A673 (cell line): ENCODE measurements at regions of chr6 and their contacts with region 1.

Region 1: DNA sequence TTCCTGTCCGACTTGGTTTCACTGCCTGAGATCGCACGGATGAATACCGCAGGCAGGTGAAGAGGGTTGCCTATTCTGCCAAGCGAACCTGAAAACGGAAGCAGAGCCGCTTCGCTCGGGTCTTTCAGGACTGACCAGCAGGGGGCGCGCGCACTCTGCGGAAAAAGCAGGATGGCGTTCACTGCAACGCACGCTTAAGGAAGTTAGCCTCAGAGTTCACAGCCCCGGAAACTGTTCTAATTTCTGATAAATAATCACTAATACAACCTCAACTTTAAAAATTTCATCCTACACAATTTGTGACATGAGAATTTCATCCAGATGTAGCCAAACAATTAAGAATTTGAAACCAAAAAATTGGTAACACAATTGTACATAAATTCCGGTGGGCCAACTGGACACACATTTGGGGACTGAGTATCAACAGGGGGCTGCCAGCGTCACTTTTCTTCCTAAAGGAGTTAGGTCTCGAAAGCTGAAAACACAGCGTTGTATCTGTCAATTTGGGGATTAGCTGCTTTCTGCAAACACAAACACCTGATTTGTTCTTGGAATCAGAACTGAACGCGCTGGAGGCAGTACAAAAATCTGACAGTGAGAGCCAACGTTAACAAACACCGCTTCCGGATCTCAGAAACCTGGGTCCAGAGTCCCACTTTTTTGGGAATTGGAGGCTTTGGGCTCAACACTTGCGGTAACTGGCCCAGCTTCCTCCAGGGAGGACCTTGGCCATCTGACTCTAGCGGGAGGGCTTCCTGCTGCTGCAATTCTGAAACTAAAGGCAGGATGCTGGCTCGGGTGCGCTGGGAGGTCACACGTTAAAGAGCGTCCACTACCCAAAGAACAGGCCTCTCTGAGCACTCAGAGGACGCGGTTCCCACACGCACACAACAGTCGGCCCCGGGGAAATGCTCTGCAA is 8.8 kb downstream of the PXDC1 start:
- DNase-seq: peak; percentile 74
- H3K4me3 ChIP-seq: no peak overlapping the region
- H3K27ac ChIP-seq: peak overlapping the region; percentile 25
- H3K4me1 ChIP-seq: peaks cover 20% of the 10 kb centered on the region
- H3K27me3 ChIP-seq: no peaks in the 10 kb centered on the region
- CTCF ChIP-seq: peak; percentile 95

Region 2: GRCh38 chr6:3542032-3542640 is 200.5 kb before region 1 on chr6:
- CTCF ChIA-PET with region 1: no interaction called
- POLR2A ChIA-PET with region 1: no interaction called
- intact Hi-C with region 1: no loop called
- DNase-seq: no peak
- H3K4me3 ChIP-seq: no peak overlapping the region
- H3K27ac ChIP-seq: no peak overlapping the region
- H3K4me1 ChIP-seq: no peaks in the 10 kb centered on the region
- H3K27me3 ChIP-seq: no peaks in the 10 kb centered on the region
- CTCF ChIP-seq: no peak

Region 3: DNA sequence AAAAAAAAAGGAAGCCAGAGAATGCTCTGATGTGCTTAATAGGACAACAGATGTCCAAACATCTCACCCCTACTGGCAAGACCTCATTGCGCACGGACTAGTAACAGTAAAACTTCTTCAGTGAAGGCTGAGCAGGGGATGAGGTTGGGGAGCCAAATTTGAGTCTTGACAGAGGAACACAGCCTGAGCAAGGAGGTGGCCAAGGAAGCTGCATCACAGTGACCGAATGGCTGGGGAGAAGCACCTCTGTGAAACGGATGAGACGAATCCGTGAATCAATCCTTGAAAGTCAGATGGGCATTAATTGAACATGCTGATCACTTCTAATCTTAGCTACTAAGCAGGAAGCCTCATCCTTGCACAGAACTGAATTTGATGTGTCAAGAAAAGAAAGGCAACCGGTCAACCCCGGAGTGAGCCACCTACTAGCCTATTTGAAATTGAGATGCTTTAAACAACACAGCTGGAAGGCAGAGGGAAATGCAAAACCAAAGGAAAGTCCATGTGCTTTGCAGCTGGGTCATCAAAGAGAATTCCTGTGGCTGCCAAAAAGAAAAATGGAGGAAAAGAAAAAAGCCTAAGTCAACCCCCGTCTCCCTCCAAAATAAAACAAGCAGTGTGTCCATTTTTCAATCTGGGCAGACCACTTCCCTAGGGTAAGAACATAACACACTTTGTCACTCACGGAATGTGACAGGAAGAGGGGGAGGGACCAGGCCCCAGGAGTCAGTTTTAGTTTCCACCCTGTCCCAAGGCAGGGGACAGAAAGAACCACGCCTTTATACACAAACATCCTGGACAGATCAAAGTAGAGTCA is 20.7 kb before region 1 on chr6:
- CTCF ChIA-PET with region 1: no interaction called
- POLR2A ChIA-PET with region 1: no interaction called
- intact Hi-C with region 1: no loop called
- DNase-seq: no peak
- H3K4me3 ChIP-seq: no peak overlapping the region
- H3K27ac ChIP-seq: no peak overlapping the region
- H3K4me1 ChIP-seq: no peaks in the 10 kb centered on the region
- H3K27me3 ChIP-seq: no peaks in the 10 kb centered on the region
- CTCF ChIP-seq: no peak

Region 4: DNA sequence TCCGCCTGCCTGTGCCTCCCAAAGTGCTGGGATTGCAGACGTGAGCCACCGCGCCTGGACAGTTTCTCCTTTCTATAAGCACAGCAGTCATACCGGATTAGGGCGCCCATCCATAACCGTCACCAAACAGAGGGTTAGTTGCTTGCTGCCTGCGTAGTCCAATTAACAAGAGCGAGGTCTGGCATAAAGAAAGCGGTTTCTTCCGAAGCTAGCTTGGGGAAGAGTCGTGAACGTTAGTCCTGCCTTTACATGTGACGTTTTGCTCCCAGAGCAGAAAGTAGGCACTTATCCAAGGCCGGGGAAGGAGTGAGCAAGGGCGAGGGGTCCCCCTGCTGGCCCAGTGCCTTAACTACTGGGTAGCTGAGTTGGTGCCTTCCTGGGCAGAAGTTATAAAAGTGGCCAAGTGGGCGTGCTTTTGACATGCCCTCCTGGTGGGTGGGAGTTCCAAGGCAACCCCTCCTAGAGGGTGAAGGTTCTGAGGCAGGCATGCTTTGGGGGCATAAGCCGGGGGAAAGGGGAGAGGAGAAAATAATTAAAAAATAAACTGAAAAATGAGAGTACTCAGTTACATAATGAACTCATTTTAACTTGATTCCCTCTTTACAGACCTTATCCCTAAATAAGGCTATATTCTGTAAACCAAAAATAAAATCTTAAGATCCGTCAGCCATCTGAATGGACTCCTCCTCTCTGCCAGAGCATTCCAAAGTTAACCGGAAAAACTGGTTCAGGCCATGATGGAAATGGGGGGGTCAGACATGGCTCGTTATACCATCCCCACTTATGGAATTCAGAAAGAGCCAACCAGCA is 248.2 kb after region 1 on chr6:
- CTCF ChIA-PET with region 1: interaction called, 7 read pairs
- POLR2A ChIA-PET with region 1: no interaction called
- intact Hi-C with region 1: loop called (anchors 2 kb)
- DNase-seq: peak; percentile 94
- H3K4me3 ChIP-seq: no peak overlapping the region
- H3K27ac ChIP-seq: peak overlapping the region; percentile 59
- H3K4me1 ChIP-seq: peaks cover 3% of the 10 kb centered on the region
- H3K27me3 ChIP-seq: no peaks in the 10 kb centered on the region
- CTCF ChIP-seq: peak; percentile 95

Region 5: GRCh38 chr6:4008324-4009047 is 265.8 kb after region 1 on chr6:
- CTCF ChIA-PET with region 1: no interaction called
- POLR2A ChIA-PET with region 1: no interaction called
- intact Hi-C with region 1: loop called (anchors 5 kb)
- DNase-seq: peak; percentile 88
- H3K4me3 ChIP-seq: no peak overlapping the region
- H3K27ac ChIP-seq: peak overlapping the region; percentile 45
- H3K4me1 ChIP-seq: peaks cover 20% of the 10 kb centered on the region
- H3K27me3 ChIP-seq: no peaks in the 10 kb centered on the region
- CTCF ChIP-seq: peak; percentile 68

Region 6: DNA sequence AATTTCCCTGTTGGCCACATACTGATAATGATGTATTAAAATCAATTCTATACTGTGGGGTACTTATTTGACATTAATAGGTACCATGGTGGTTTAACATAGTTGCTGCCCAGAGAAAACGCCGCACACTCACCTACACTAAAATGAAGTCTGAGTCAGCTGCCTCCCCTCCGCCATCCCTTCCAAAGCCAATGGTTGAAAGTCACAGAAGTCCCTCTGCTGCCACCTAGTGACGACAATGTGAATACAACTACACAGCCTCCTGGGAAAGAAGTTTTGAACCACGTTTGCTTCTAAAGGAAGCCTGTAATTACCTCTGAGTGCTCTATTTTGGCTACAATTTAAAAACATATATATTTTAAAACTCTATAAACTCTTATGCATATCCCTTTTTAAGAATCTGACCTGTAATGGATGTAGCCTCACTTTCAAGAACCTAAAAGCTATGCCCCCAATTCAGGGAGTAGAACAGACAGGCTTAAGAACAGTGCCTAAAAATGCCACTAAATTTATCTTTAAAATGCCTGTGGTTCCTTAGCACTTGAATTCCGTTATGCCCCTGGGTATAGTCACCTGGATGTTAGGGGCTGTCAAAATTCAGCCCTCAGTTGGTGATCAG is 413.3 kb after region 1 on chr6:
- CTCF ChIA-PET with region 1: no interaction called
- POLR2A ChIA-PET with region 1: no interaction called
- intact Hi-C with region 1: loop called (anchors 5 kb)
- DNase-seq: peak; percentile 84
- H3K4me3 ChIP-seq: no peak overlapping the region
- H3K27ac ChIP-seq: no peak overlapping the region
- H3K4me1 ChIP-seq: peaks cover 6% of the 10 kb centered on the region
- H3K27me3 ChIP-seq: no peaks in the 10 kb centered on the region
- CTCF ChIP-seq: peak; percentile 89

Region 7: GRCh38 chr6:4210629-4211423 is 468.1 kb after region 1 on chr6:
- CTCF ChIA-PET with region 1: no interaction called
- POLR2A ChIA-PET with region 1: no interaction called
- intact Hi-C with region 1: loop called (anchors 10 kb)
- DNase-seq: peak; percentile 73
- H3K4me3 ChIP-seq: no peak overlapping the region
- H3K27ac ChIP-seq: no peak overlapping the region
- H3K4me1 ChIP-seq: no peaks in the 10 kb centered on the region
- H3K27me3 ChIP-seq: no peaks in the 10 kb centered on the region
- CTCF ChIP-seq: peak; percentile 78